ENCODE measurements at regions of chr12 and their contacts with region 1.

Region 1: DNA sequence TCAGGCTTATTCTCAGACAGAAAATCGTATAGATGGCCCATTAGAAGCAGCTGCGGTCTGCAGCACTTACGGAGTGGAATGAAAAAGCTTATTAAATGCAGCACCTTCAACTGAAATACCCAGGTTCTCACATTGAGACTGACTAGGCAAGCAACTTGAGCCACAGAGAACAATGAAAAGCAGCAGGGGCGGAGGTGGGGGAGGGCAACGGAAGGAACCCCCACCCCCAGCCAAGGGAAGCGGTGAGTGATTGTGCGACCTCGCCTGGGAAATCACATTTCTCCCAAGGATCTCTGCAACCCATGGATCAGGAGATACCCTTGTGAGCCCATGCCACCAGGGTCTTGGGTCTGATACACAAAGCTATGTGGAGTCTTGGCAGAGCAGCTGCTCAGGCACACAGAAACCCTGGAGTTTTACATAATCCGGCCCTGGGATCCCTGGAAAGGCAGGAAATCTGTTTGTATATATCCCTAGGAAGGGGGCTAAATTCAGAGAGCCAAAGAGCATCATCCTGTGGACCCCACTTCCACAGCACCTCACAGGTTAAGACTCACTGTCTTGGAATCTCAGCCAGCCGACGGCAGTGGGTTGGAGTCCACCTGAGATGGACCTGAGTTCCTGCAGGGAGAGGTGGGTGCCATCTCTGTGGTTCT is 38.1 kb downstream of the PZP start:
- DNase-seq: peak in 4 of 5 donors; percentile 34 to 65 (median 48)
- ATAC-seq: peak; percentile 67 to 94 (median 73)
- H3K4me3 ChIP-seq: peak overlapping the region in 5 of 12 donors; percentile 5 to 28 (median 22)
- H3K27ac ChIP-seq: peak overlapping the region; percentile 27 to 83 (median 60)
- H3K4me1 ChIP-seq: peaks cover 0 to 35% (median 9%) of the 10 kb centered on the region in 12 donors
- H3K27me3 ChIP-seq: no peaks in the 10 kb centered on the region
- CTCF ChIP-seq: no peak
- POLR2A ChIP-seq: peak in 1 of 2 donors; percentile 21

Region 2: GRCh38 chr12:9124383-9125031 is 45.6 kb before region 1 on chr12:
- intact Hi-C with region 1: loop called in 2 of 10 experiments (anchors 5 kb)
- DNase-seq: no peak
- ATAC-seq: peak in 3 of 4 donors; percentile 14 to 41 (median 22)
- H3K4me3 ChIP-seq: peak overlapping the region in 8 of 12 donors; percentile 21 to 55 (median 42)
- H3K27ac ChIP-seq: peak overlapping the region in 11 of 12 donors; percentile 49 to 68 (median 60)
- H3K4me1 ChIP-seq: peaks cover 0 to 34% (median 18%) of the 10 kb centered on the region in 12 donors
- H3K27me3 ChIP-seq: no peaks in the 10 kb centered on the region
- CTCF ChIP-seq: no peak
- POLR2A ChIP-seq: no peak

Region 3: DNA sequence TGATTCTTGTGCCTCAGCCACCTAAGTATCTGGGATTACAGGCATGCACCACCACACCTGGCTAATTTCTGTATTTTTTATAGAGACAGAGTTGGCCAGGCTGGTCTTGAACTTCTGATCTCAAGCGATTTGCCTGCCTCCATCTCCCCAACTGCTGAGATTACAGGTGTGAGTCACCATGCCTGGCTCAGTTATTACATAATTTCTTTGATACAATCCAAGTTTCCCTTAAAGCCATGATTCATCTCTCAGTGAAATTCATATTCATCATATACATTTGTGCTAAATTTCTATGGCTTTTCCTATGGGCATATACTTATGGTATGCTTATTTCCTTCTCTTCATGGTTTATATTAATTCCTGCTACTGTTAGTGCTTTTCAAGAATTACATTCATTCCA is 67.2 kb after region 1 on chr12:
- intact Hi-C with region 1: loop called in 5 of 10 experiments (anchors 5 to 10 kb)
- DNase-seq: no peak
- ATAC-seq: no peak
- H3K4me3 ChIP-seq: peak overlapping the region in 1 of 12 donors; percentile 59
- H3K27ac ChIP-seq: peak overlapping the region in 1 of 12 donors; percentile 53
- H3K4me1 ChIP-seq: peaks cover 0 to 8% (median 0%) of the 10 kb centered on the region in 12 donors
- H3K27me3 ChIP-seq: no peaks in the 10 kb centered on the region
- CTCF ChIP-seq: no peak
- POLR2A ChIP-seq: no peak

Region 4: GRCh38 chr12:9244894-9245293 is 74.8 kb after region 1 on chr12:
- intact Hi-C with region 1: loop called in 1 of 10 experiments (anchors 5 kb)
- DNase-seq: no peak
- ATAC-seq: no peak
- H3K4me3 ChIP-seq: no peak overlapping the region
- H3K27ac ChIP-seq: peak overlapping the region in 3 of 12 donors; percentile 10 to 67 (median 29)
- H3K4me1 ChIP-seq: peaks cover 0 to 11% (median 0%) of the 10 kb centered on the region in 12 donors
- H3K27me3 ChIP-seq: no peaks in the 10 kb centered on the region
- CTCF ChIP-seq: no peak
- POLR2A ChIP-seq: no peak

Region 5: GRCh38 chr12:9647825-9648700 is 478.0 kb after region 1 on chr12:
- intact Hi-C with region 1: no loop called
- DNase-seq: peak; percentile 82 to 90 (median 84)
- ATAC-seq: peak; percentile 89 to 97 (median 95)
- H3K4me3 ChIP-seq: peak overlapping the region; percentile 38 to 84 (median 70)
- H3K27ac ChIP-seq: peak overlapping the region; percentile 83 to 95 (median 89)
- H3K4me1 ChIP-seq: peaks cover 0 to 45% (median 25%) of the 10 kb centered on the region in 12 donors
- H3K27me3 ChIP-seq: no peaks in the 10 kb centered on the region
- CTCF ChIP-seq: no peak
- POLR2A ChIP-seq: peak in 1 of 2 donors; percentile 76

Measured in heart left ventricle (tissue), 16 donors.